Activated CD8-positive, alpha-beta memory T cell treated with anti-CD3 and anti-CD28 coated beads, Interleukin-2, amount 10 ng/mL, durations not matched to agents 7 days and 5 days (primary cell): ENCODE measurements at regions of chr1 and their contacts with region 1.

Region 1: GRCh38 chr1:174217787-174218574 is 58.7 kb downstream of the RABGAP1L start:
- DNase-seq: no peak
- ATAC-seq: peak; percentile 57
- H3K4me3 Mint-ChIP-seq: no peak overlapping the region
- H3K27ac Mint-ChIP-seq: no peak overlapping the region
- H3K4me1 Mint-ChIP-seq: no peaks in the 10 kb centered on the region
- H3K27me3 Mint-ChIP-seq: no peaks in the 10 kb centered on the region

Region 2: DNA sequence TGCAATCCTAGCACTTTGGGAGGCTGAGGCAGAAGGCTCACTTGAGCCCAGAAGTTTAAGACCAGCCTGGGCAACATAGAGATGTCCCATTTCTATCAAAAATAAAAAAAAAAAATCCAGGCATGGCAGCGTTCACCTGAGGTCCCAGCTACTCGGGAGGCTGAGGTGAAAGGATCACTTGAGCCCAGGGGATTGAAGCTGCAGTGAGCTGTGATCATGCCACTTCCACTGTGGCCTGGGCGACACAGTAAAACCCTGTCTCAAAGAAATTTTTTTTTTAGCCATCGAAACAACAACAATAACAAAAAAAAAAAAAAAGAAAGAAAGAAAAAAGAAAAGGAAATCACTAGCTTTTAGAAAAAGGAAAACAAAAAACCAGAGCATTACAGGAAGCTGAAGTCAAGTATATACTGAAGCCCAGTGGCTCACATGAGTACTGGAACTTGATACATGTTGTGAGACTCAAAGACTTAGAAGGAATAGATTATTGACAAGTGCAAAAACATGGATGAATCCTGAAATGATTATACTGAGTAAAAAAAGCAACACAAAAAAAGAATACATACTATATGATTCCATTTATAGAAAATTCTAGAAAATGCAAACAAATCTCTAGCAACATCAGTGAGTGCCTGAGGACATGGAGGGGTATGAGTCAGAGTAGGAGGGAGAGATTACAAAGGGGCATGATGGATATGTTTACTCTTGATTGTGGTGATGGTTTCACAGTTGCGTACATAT is 64.7 kb before region 1 on chr1:
- CTCF ChIA-PET with region 1: interaction called, 12 read pairs
- DNase-seq: no peak
- ATAC-seq: peak; percentile 83
- H3K4me3 Mint-ChIP-seq: peak overlapping the region; percentile 28
- H3K27ac Mint-ChIP-seq: peak overlapping the region; percentile 73
- H3K4me1 Mint-ChIP-seq: peaks cover 48% of the 10 kb centered on the region
- H3K27me3 Mint-ChIP-seq: no peaks in the 10 kb centered on the region